PC-3 (cell line): ENCODE measurements at regions of chr17 and their contacts with region 1.

Region 1: GRCh38 chr17:67366193-67367157 is at the start of gene PSMD12:
- DNase-seq: peak; percentile 95
- ATAC-seq: peak; percentile 89
- H3K4me3 ChIP-seq: peak within 1 kb of the TSS; percentile 87
- H3K27ac ChIP-seq: peak within 1 kb of the TSS; percentile 81
- H3K4me1 ChIP-seq: peaks cover 33% of the 10 kb centered on the region
- H3K27me3 ChIP-seq: no peaks in the 10 kb centered on the region
- CTCF ChIP-seq: no peak
- total RNA-seq, gene PSMD12: 60.0 and 68.8 TPM in 2 replicates

Region 2: DNA sequence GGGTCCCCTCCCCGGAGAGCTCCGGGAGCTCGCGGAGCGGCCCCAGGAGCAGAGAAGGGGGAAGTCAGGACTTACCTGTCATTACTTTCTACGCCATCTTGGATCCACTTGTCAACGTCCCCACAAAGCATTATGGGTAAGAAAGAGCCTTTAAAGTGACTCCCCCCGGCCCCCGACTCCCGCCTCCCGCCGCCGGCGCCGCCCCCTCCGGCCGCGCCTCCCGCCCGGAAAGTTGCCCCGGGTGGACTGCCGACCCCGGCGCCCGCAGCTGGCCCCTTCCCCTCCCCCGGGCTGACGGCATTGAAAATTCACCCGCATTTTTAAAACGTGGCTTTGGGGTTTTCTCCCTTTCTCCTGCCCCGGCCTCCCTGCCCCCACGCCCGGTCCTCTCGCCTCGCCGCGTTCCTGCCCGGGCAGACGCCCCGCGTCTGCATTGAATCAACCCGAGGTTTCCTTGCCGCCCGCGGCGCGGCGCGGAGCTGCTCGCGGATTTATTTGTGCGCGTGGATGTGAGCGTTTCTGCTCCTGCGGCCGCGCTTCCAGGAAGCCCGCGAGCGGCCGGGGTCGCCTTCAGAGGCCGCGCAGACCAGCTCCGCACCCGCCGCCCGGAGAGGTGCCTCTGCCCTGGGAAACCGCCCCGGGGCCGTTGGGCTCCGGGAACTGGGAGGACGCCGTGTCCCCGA is 121.3 kb before region 1 on chr17 and contains the start of gene HELZ:
- CTCF ChIA-PET with region 1: no interaction called
- POLR2A ChIA-PET with region 1: no interaction called
- intact Hi-C with region 1: loop called (anchors 5 kb)
- DNase-seq: peak; percentile 87
- ATAC-seq: peak; percentile 28
- H3K4me3 ChIP-seq: peak within 1 kb of the TSS; percentile 93
- H3K27ac ChIP-seq: peak within 1 kb of the TSS; percentile 9; the same call in 1 of the 2 replicates
- H3K4me1 ChIP-seq: peaks cover 20% of the 10 kb centered on the region
- H3K27me3 ChIP-seq: no peaks in the 10 kb centered on the region
- CTCF ChIP-seq: no peak
- total RNA-seq, gene HELZ: 22.6 and 31.3 TPM in 2 replicates

Region 3: GRCh38 chr17:67441052-67441927 is 74.8 kb after region 1 on chr17:
- CTCF ChIA-PET with region 1: interaction called, 5 read pairs
- POLR2A ChIA-PET with region 1: interaction called, 13 read pairs
- intact Hi-C with region 1: no loop called
- DNase-seq: peak; percentile 89
- ATAC-seq: peak; percentile 97
- H3K4me3 ChIP-seq: peak overlapping the region; percentile 38
- H3K27ac ChIP-seq: peak overlapping the region; percentile 91
- H3K4me1 ChIP-seq: peaks cover 17% of the 10 kb centered on the region
- H3K27me3 ChIP-seq: no peaks in the 10 kb centered on the region
- CTCF ChIP-seq: no peak

Region 4: DNA sequence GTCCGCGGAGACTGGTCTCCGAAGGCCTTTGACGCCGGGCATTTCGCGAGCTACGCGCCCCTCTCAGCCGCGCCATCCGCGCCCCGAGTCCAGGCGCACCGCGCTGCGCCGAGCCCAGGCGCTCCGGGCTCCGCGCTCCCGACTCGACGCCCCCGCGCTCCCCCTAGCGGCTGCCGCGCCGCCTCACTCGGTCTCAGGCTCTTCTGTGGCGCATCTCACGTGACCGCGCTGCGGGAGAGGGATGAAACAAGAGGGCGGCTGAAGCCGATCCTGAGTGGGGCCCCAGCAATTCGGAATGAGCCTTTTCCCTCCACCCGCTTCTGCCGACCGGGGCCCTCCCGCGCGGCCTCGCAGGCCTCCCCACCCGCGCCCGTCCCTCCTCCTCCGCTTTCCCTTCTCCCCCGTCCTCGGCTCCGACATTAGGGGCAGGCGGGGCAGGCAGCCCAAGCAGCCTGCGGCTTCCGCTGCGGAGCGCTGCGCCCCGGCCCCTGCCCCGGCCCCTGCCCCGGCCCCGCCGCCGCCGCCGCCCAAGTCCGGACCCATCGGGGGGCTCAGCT is 838.9 kb after region 1 on chr17:
- CTCF ChIA-PET with region 1: no interaction called
- POLR2A ChIA-PET with region 1: interaction called, 21 read pairs
- intact Hi-C with region 1: no loop called
- DNase-seq: peak; percentile 91
- ATAC-seq: peak; percentile 83
- H3K4me3 ChIP-seq: peak overlapping the region; percentile 94
- H3K27ac ChIP-seq: no peak overlapping the region
- H3K4me1 ChIP-seq: peaks cover 14% of the 10 kb centered on the region
- H3K27me3 ChIP-seq: peaks cover 2% of the 10 kb centered on the region
- CTCF ChIP-seq: peak; percentile 91